ENCODE measurements at regions of chr9 and their contacts with region 1.

Region 1: DNA sequence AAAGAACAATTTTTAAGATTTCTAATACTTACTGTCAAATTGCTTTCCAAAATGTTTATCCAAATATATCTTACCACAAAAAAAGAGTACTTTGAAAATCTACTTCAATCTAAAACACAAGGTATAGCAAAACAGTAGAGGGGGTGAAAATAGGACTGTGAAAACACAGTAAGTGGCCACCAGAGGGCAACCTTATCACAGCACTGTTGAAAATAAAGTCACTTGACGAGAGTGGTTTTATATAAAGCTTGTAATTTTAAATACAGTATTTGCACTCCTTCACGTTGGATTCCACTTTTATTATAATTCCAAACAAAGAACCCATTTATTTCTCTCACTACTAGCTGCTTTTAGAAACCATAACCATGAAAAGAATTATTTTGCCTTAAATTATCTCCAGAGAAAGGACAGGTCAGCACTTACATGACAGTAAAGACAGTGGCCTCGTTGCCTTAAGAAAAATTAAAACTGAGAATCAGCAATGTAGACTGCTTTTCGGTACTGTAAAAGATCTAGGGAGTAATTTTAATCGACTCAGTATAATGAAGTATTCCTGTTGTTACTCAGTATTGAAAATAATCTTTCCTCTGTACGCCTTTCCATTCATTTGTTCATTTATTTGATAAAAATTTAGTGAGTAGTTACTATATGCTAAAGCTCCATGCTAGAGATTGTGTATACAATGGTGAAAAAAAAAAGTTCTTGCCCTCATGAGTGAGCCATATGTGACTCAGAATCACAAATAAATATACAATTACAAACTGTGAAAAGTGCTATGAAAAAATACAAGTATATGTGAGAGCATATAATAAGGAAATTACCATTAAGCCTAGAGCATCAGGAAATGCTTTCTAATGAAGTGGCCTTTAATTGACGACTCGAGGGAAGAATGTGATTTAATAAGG is 40.0 kb upstream of the CDK5RAP2 start:
- DNase-seq: peak in 6 of 10 donors; percentile 36 to 86 (median 64)

Region 2: DNA sequence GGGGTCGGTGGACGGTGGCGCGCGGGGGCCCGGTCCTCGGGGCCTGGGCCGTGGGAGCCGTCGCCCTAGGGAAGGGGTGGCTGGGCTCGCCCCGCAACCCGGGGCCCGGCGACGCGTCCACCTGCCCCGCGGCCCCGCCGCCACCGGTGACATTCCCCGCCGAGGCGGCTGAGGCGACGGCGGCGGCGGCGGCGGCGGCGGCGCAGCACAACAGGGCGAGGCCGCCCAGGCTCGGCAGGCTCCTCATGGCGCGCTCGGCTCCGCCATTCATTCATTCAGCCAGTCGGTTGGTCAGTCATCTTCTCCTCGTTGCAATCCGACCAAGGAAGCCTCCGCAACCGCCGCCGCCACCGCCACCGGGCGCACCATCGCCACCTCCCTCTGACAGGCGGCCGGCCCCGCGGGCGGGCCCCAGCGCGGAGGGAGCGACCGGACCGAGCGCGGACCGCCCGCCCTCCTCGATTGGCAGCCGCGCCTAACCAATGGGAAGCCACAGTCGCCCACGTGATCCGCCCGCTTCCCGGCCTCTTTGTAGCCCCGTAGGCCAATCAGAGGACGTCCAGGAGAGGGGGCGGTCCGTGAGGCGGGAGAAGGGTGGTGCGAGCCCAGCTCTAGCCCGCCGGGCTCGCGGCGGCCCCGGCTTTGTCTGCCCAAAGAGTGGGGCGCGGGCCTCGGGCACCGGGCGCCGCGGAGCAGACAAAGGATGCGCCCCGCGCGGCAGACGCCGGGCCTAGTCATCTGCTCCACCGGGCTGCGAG is 94.3 kb after region 1 on chr9 and contains the start of gene MEGF9:
- intact Hi-C with region 1: loop called (anchors 2 kb)
- DNase-seq: peak; percentile 99 to 100 (median 100)

Region 3: GRCh38 chr9:120755827-120756434 is 135.9 kb after region 1 on chr9:
- intact Hi-C with region 1: no loop called
- DNase-seq: peak in 4 of 10 donors; percentile 53 to 63 (median 58)